Activated T-helper 1 cell treated with anti-CD3 and anti-CD28 coated beads, Interleukin-12 subunit alpha, Interleukin-12 subunit beta, Interleukin-2, Interleukin-4 antibody, amounts not matched to agents 30 ng/mL and 10 ng/mL and 1 ng/mL, durations not matched to agents 14 hours and 24 hours and 36 hours (primary cell): ENCODE measurements at regions of chr17 and their contacts with region 1.

Region 1: DNA sequence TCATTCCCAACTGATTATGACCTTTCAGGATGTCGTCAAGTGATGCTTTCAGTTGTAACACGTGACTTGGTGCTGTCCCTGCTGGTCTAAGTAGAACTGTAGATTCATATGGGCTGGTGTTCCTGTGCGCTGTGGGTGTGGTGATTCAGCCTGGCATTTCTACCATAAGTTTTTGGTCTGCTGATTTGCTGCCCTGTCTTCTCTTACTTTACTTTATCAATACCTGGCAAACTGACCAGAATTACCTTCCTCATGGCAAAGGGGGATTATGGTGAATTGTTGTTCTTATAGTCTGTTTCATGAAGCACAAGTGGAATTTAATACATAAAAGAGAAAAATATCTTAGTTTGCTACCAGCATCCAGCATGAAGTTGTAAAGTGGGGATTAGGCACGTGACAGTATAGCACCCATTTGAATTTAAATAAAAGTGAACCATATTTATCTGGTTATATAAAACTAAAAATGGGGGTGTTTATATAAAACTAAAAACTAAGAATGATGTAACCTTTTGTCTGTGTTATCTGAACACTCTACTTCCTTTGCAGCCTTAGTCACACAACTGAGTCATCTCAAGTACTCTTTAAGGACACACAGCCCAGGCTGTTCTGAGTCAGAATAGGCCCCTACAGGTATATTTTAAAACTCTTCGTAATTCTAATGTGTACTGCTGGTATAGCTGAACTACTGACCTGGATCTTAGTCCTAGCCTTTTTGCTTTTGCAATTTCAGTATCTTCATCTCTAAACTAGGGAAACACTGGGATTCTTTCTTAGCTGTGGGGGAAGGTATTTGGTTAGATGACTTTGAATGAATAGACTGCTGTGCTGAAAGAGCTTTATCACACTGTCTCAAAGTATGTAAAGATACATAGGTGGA is 28.3 kb downstream of the TTC19 start:
- DNase-seq: peak; percentile 33
- H3K4me3 Mint-ChIP-seq: peak overlapping the region; percentile 68
- H3K27ac Mint-ChIP-seq: peak overlapping the region; percentile 91
- H3K4me1 Mint-ChIP-seq: peaks cover 33% of the 10 kb centered on the region
- H3K27me3 Mint-ChIP-seq: no peaks in the 10 kb centered on the region

Region 2: DNA sequence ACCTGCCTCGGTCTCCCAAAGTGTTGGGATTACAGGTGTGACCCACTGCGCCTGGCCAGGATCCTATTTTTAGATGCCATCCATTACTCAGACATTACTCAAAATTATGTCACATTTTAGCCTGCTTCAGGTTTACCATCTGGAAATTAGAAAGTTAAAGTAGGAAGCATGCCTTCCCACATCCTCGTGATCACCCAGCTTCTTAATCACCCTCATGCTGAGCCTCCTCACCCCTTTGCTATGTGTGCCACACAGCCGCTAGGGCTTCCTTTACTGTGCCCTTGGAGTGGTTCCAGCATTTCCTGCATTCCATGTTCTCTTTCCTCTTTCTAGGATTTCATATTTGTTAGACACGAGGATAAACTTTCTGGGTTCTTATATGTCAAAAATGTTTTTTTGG is 73.7 kb before region 1 on chr17:
- intact Hi-C with region 1: loop called (anchors 1 kb)
- DNase-seq: no peak
- H3K4me3 Mint-ChIP-seq: no peak overlapping the region
- H3K27ac Mint-ChIP-seq: no peak overlapping the region
- H3K4me1 Mint-ChIP-seq: peaks cover 34% of the 10 kb centered on the region
- H3K27me3 Mint-ChIP-seq: peaks cover 64% of the 10 kb centered on the region

Region 3: GRCh38 chr17:15981208-15981607 is 46.7 kb before region 1 on chr17:
- intact Hi-C with region 1: loop called (anchors 1 kb)
- DNase-seq: no peak
- H3K4me3 Mint-ChIP-seq: no peak overlapping the region
- H3K27ac Mint-ChIP-seq: no peak overlapping the region
- H3K4me1 Mint-ChIP-seq: peaks cover 15% of the 10 kb centered on the region
- H3K27me3 Mint-ChIP-seq: no peaks in the 10 kb centered on the region

Region 4: GRCh38 chr17:15999439-16000350 is 28.3 kb before region 1 on chr17 and contains the starts of genes TTC19 and ZSWIM7:
- intact Hi-C with region 1: loop called (anchors 1 kb)
- DNase-seq: peak; percentile 93
- H3K4me3 Mint-ChIP-seq: peak within 1 kb of the TSS; percentile 96
- H3K27ac Mint-ChIP-seq: peak within 1 kb of the TSS; percentile 99
- H3K4me1 Mint-ChIP-seq: peaks cover 35% of the 10 kb centered on the region
- H3K27me3 Mint-ChIP-seq: peaks cover 1% of the 10 kb centered on the region
- total RNA-seq, gene TTC19: 38.0 and 40.3 TPM in 2 replicates
- total RNA-seq, gene ZSWIM7: 8.3 and 9.5 TPM in 2 replicates

Region 5: DNA sequence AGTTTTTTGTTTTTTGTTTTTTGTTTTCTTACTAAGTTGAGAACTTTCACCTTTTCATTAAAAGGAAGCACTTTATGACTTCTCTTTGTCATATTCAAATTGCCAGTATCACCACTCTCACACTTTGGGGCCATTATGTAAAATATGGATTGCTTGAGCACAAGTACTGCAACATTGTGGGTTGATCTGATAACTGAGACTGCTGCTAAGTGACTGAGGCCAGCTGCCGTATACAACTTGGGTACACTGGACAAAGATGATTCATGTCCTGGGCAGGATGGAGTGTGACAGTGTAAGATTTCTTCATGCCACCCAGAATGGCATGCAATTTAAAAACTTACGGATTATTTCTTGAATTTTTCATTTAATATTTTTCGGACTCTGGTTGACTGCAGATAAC is 20.5 kb before region 1 on chr17:
- intact Hi-C with region 1: loop called (anchors 1 kb)
- DNase-seq: no peak
- H3K4me3 Mint-ChIP-seq: no peak overlapping the region
- H3K27ac Mint-ChIP-seq: peak overlapping the region; percentile 26
- H3K4me1 Mint-ChIP-seq: peaks cover 28% of the 10 kb centered on the region
- H3K27me3 Mint-ChIP-seq: no peaks in the 10 kb centered on the region

Region 6: GRCh38 chr17:16415031-16415924 is 387.3 kb after region 1 on chr17 and contains the start of gene TRPV2:
- intact Hi-C with region 1: loop called (anchors 10 kb)
- DNase-seq: peak; percentile 37
- H3K4me3 Mint-ChIP-seq: peak within 1 kb of the TSS; percentile 96
- H3K27ac Mint-ChIP-seq: peak within 1 kb of the TSS; percentile 99
- H3K4me1 Mint-ChIP-seq: peaks cover 43% of the 10 kb centered on the region
- H3K27me3 Mint-ChIP-seq: no peaks in the 10 kb centered on the region
- total RNA-seq, gene TRPV2: 38.2 and 42.2 TPM in 2 replicates